WTC11 (cell line): ENCODE measurements at regions of chr13 and their contacts with region 1.

Region 1: DNA sequence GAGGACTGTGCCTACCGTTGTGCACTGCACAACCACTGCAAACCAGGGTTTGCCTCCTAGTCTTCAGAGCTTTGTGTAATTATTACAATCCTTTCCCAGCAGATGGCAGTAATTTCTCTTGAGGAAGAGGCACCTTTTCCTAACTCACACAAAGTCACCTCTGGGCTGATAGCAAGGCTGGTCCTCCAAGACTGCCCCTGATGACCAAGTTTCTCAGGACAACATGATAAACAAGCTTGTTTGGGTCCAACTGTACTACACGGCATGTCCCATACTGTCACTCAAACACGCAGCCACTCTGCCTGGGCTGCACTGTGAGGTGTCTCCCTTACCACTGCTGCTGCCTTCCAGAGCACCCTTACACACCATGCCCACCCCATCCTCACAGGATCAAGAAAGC is 39.3 kb downstream of the RFXAP start:
- DNase-seq: no peak
- ATAC-seq: peak; percentile 91
- H3K4me3 Mint-ChIP-seq: no peak overlapping the region
- H3K27ac Mint-ChIP-seq: no peak overlapping the region
- H3K4me1 Mint-ChIP-seq: no peaks in the 10 kb centered on the region
- H3K27me3 Mint-ChIP-seq: no peaks in the 10 kb centered on the region
- CTCF ChIP-seq: 0 out of 2 replicates have a peak, but pooled peaks have one; percentile 13

Region 2: DNA sequence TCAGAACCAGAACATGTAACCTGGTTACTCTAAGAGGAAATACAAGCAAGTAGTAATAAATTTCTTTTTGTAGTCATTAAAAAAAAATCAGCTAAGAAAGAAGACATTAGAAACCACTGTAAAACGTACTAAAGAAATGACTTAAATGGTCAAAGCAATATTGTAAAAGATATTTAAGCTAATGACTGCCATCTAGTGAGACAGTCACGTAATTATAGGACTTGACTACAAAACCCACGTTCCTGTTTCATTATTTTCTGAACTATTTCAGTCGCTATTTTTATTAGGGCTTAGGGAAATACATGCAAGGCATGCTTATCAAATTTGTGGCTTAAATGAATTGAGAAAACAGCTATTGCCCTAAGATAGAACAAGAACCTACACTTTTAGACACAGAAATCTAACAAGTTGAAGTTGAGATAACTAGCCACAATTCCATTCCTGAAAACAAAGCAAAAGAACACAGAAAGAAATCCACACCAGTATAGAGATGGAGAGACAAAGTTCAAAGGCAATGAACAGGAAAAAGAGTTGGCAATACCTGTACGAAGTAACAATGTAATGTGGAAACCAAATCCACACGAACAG is 123.0 kb after region 1 on chr13:
- CTCF ChIA-PET with region 1: interaction called, 14 read pairs
- POLR2A ChIA-PET with region 1: no interaction called
- DNase-seq: no peak
- ATAC-seq: no peak
- H3K4me3 Mint-ChIP-seq: no peak overlapping the region
- H3K27ac Mint-ChIP-seq: no peak overlapping the region
- H3K4me1 Mint-ChIP-seq: no peaks in the 10 kb centered on the region
- H3K27me3 Mint-ChIP-seq: no peaks in the 10 kb centered on the region
- CTCF ChIP-seq: no peak